ENCODE measurements at regions of chr16 and their contacts with region 1.

Region 1: GRCh38 chr16:62130101-62130500 is 93.9 kb upstream of the CDH8 start:
- DNase-seq: peak; percentile 62
- H3K4me3 ChIP-seq: no peak overlapping the region
- H3K27ac ChIP-seq: no peak overlapping the region
- H3K4me1 ChIP-seq: peaks cover 15% of the 10 kb centered on the region
- H3K27me3 ChIP-seq: no peaks in the 10 kb centered on the region
- CTCF ChIP-seq: no peak

Region 2: DNA sequence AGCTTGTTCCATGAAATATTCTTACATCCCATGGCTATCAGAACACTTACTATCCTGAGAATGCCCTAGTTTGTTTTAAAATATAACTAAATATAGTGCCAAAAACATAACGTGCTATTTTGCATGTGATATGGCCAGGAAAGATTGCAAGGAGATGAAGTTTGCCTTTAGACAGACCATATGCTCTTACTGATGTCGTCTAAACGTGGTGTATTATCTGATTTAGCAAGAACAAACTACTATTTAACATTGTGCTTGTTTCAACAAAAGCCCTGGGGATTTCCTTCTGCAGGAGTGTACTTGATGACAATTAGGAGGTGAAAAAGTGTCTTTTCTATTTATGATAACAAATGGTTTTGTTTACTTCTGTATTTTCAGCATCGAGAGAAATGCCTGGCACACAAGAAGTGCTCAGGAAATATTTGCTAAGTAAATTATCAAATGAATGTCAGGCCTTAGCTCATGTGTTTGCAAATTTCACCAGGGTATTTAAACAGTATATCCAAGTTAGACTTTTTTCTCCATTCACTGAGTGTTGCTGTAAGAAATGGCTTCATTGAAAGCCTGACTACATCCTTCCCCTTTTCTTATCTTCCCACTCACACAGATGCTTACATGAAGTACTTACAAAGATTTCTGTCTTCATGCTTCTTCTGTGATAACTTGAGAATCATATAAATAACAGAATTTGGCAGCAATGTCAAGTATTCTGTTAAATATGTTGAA is 1127.5 kb before region 1 on chr16:
- CTCF ChIA-PET with region 1: no interaction called
- POLR2A ChIA-PET with region 1: no interaction called
- intact Hi-C with region 1: loop called (anchors 10 kb)
- DNase-seq: no peak
- H3K4me3 ChIP-seq: no peak overlapping the region
- H3K27ac ChIP-seq: no peak overlapping the region
- H3K4me1 ChIP-seq: no peaks in the 10 kb centered on the region
- H3K27me3 ChIP-seq: no peaks in the 10 kb centered on the region
- CTCF ChIP-seq: no peak

Region 3: DNA sequence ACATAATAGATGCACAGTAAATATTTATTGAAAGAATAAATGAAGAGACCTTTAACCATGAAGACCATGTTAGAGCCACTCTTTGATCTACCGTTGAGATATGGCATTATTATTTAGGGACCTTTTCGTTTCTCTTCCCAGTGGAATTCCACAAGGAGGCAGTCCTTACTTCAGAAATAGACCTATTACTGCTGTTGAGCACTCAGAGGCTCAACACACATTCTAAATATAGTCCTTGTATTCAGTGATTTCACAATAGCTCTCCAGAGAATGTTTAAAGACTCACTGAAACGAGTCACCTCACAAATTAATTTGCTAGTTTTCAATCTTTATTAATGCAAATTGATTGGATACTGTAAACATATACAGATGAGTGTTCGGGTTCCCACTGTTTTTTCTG is 697.7 kb before region 1 on chr16:
- CTCF ChIA-PET with region 1: no interaction called
- POLR2A ChIA-PET with region 1: no interaction called
- intact Hi-C with region 1: loop called (anchors 5 kb)
- DNase-seq: peak; percentile 66
- H3K4me3 ChIP-seq: no peak overlapping the region
- H3K27ac ChIP-seq: no peak overlapping the region
- H3K4me1 ChIP-seq: no peaks in the 10 kb centered on the region
- H3K27me3 ChIP-seq: no peaks in the 10 kb centered on the region
- CTCF ChIP-seq: peak; percentile 59

Region 4: GRCh38 chr16:61936522-61936921 is 193.6 kb before region 1 on chr16:
- CTCF ChIA-PET with region 1: no interaction called
- POLR2A ChIA-PET with region 1: no interaction called
- intact Hi-C with region 1: loop called (anchors 5 kb)
- DNase-seq: peak; percentile 53
- H3K4me3 ChIP-seq: no peak overlapping the region
- H3K27ac ChIP-seq: no peak overlapping the region
- H3K4me1 ChIP-seq: peaks cover 45% of the 10 kb centered on the region
- H3K27me3 ChIP-seq: no peaks in the 10 kb centered on the region
- CTCF ChIP-seq: peak; percentile 81

Region 5: GRCh38 chr16:62041401-62041800 is 88.7 kb before region 1 on chr16:
- CTCF ChIA-PET with region 1: interaction called, 4 read pairs
- POLR2A ChIA-PET with region 1: no interaction called
- intact Hi-C with region 1: loop called (anchors 10 kb)
- DNase-seq: peak; percentile 87
- H3K4me3 ChIP-seq: no peak overlapping the region
- H3K27ac ChIP-seq: no peak overlapping the region
- H3K4me1 ChIP-seq: peaks cover 33% of the 10 kb centered on the region
- H3K27me3 ChIP-seq: no peaks in the 10 kb centered on the region
- CTCF ChIP-seq: peak; percentile 79

Region 6: GRCh38 chr16:62088731-62089410 is 41.2 kb before region 1 on chr16:
- CTCF ChIA-PET with region 1: interaction called, 7 read pairs
- POLR2A ChIA-PET with region 1: no interaction called
- intact Hi-C with region 1: loop called (anchors 2 kb)
- DNase-seq: peak; percentile 94
- H3K4me3 ChIP-seq: no peak overlapping the region
- H3K27ac ChIP-seq: peak overlapping the region; percentile 89
- H3K4me1 ChIP-seq: peaks cover 47% of the 10 kb centered on the region
- H3K27me3 ChIP-seq: no peaks in the 10 kb centered on the region
- CTCF ChIP-seq: no peak

Region 7: DNA sequence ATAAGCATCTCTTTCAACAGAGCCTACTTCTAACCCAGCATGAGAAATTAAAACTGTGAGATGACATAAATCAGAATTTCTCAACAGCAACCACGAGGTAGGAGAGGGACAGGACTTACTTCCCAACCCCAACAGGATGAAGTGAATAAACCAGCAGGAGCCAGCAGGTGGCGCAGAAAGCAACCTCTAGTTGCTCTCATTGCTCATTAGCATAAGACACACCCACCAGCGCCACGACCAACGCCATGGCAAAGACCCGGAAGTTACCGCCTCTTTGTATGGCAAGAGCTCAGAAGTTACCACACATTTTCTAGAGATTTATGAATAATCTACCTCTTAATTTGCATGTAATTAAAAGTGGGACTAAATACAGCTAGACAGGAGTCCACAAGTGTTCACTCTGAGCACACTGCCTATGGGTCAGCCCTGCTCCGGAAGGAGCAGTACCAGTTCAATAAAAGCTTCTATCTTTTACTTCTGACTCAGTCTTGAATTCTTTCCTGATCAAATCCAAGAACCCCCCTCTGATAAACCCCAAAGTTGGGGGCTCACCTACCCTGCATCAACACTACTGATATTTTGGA is 95.7 kb after region 1 on chr16:
- CTCF ChIA-PET with region 1: no interaction called
- POLR2A ChIA-PET with region 1: no interaction called
- intact Hi-C with region 1: no loop called
- DNase-seq: peak; percentile 97
- H3K4me3 ChIP-seq: no peak overlapping the region
- H3K27ac ChIP-seq: no peak overlapping the region
- H3K4me1 ChIP-seq: no peaks in the 10 kb centered on the region
- H3K27me3 ChIP-seq: no peaks in the 10 kb centered on the region
- CTCF ChIP-seq: peak; percentile 88

Measured in A673 (cell line).